GM12878 (cell line): ENCODE measurements at regions of chr17 and their contacts with region 1.

Region 1: GRCh38 chr17:45098869-45099616 is 33.3 kb downstream of the PLCD3 start:
- DNase-seq: no peak
- ATAC-seq: peak; percentile 100
- H3K4me3 ChIP-seq: no peak overlapping the region
- H3K27ac ChIP-seq: no peak overlapping the region
- H3K4me1 ChIP-seq: no peaks in the 10 kb centered on the region
- H3K27me3 ChIP-seq: no peaks in the 10 kb centered on the region
- CTCF ChIP-seq: peak; percentile 88 to 93 (median 91)
- EP300 ChIP-seq: no peak
- POLR2A ChIP-seq: no peak
- RAD21 ChIP-seq: peak; percentile 70

Region 2: DNA sequence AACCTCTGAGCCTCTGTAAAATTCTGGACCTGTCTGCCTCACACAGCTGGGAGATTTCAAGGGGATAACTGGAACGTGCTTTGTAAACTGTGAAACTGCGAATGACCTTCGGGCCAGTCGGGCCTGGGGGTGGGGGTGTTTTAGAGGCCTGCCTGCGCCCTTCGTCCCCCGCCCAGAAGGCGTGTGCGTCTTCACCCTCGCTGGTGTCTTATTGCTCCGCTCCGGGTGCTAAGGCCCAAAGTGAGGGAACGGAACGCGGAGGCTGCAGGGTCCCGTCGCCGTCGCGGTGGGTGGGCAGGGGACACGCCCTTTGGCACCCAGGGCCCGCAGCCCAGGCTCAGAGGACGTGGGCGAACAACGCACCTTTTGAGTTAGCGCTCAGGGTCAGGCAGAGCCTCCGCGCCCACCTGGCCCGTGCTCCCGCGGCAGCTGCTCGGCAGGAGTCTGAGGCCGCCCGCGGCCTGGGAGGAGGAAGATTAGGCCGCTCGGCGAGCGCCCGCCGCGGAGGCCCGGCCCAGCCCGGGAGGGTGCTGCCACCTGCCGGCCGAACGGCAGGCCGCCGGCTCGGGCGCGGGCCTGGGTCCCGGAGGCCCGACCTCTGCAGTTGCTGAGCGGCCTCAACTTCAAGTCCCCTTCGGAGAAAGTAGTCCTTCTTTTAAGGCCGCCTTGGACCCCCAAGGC is 77.3 kb before region 1 on chr17:
- CTCF ChIA-PET with region 1: interaction called, 41 read pairs
- POLR2A ChIA-PET with region 1: no interaction called
- RAD21 ChIA-PET with region 1: interaction called, 5 read pairs
- SMC1A ChIA-PET with region 1: interaction called, 8 read pairs
- in situ Hi-C with region 1: no loop called
- intact Hi-C with region 1: loop called (anchors 5 kb)
- DNase-seq: no peak
- ATAC-seq: peak; percentile 86
- H3K4me3 ChIP-seq: no peak overlapping the region
- H3K27ac ChIP-seq: no peak overlapping the region
- H3K4me1 ChIP-seq: peaks cover 29% of the 10 kb centered on the region
- H3K27me3 ChIP-seq: peaks cover 0 to 6% of the 10 kb centered on the region in 2 experiments; a peak in 2 of 4 replicates
- CTCF ChIP-seq: peak; percentile 62 to 89 (median 74); a peak in 5 of 6 replicates
- EP300 ChIP-seq: no peak
- POLR2A ChIP-seq: peak; percentile 44; the same call in 1 of the 2 replicates
- RAD21 ChIP-seq: peak; percentile 74

Region 3: DNA sequence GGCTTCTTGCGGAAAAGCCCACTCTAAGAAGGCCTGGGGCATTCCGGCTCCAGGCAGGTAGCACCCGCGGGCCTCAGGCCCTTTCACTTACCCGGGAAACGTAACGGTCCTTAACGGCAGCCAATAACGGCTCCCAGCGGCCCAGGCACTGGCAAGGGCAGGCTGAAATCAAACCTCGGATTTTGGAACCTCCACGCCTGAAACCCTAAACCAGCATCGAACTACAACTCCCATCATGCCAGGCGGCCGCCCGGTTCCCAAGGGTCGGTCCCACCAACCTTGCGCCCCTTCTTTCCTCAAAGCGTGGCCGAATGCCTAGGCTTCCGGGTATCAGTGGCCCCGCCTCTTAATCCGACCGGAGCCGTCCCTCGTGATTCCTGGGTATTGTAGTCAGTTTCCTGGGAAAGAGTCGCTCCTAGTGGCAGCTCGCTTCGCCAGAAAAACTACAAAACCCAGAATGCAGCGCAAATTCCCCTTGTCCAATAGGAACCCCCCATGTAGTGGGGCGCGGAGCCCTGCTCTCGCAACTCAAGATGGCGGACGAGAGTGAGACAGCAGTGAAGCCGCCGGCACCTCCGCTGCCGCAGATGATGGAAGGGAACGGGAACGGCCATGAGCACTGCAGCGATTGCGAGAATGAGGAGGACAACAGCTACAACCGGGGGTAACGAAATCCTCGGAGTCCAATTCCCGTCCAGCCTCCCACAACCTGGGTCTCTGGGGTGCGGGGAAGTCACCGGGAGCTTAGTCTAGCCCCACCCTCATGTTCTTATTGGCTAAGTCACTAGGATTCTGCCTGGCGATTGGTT is 38.0 kb before region 1 on chr17 and contains the start of gene NMT1:
- CTCF ChIA-PET with region 1: interaction called, 21 read pairs
- POLR2A ChIA-PET with region 1: no interaction called
- RAD21 ChIA-PET with region 1: interaction called, 3 read pairs
- SMC1A ChIA-PET with region 1: interaction called, 5 read pairs
- in situ Hi-C with region 1: no loop called
- intact Hi-C with region 1: no loop called
- DNase-seq: peak; percentile 99
- ATAC-seq: peak; percentile 90
- H3K4me3 ChIP-seq: peak within 1 kb of the TSS; percentile 84
- H3K27ac ChIP-seq: peak within 1 kb of the TSS; percentile 98
- H3K4me1 ChIP-seq: peaks cover 10% of the 10 kb centered on the region
- H3K27me3 ChIP-seq: no peaks in the 10 kb centered on the region
- CTCF ChIP-seq: no peak
- EP300 ChIP-seq: no peak
- POLR2A ChIP-seq: peak; percentile 98
- RAD21 ChIP-seq: no peak
- polyA plus RNA-seq, gene NMT1: 282 to 342 TPM

Region 4: GRCh38 chr17:45073414-45074070 is 25.5 kb before region 1 on chr17:
- CTCF ChIA-PET with region 1: interaction called, 12 read pairs
- POLR2A ChIA-PET with region 1: no interaction called
- RAD21 ChIA-PET with region 1: no interaction called
- SMC1A ChIA-PET with region 1: no interaction called
- in situ Hi-C with region 1: no loop called
- intact Hi-C with region 1: no loop called
- DNase-seq: no peak
- ATAC-seq: no peak
- H3K4me3 ChIP-seq: no peak overlapping the region
- H3K27ac ChIP-seq: no peak overlapping the region
- H3K4me1 ChIP-seq: peaks cover 19% of the 10 kb centered on the region
- H3K27me3 ChIP-seq: no peaks in the 10 kb centered on the region
- CTCF ChIP-seq: no peak
- EP300 ChIP-seq: no peak
- POLR2A ChIP-seq: no peak
- RAD21 ChIP-seq: no peak

Region 5: DNA sequence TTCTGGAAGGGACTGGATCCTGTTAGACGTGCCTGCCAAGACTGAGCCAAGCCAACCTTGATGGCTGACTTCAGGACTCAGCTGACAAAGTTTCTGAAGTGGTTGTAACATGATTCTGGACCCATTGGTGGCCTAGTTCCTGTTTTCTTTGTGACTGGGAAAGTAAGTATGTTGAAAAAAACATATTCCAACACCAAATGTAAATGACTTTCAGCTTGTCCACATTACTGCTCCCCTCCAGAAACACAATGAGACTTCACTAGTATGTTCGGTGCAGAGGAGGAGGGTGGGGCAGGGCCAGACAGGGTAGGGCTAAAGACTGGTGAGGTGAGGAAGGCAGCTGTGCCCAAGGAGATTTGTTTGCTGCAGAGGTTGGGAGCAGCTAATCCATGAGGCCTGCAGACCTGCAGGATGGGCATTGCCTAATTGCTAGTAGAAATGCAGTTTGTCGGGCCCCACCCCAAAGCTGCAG is 11.5 kb before region 1 on chr17:
- CTCF ChIA-PET with region 1: interaction called, 23 read pairs
- POLR2A ChIA-PET with region 1: no interaction called
- RAD21 ChIA-PET with region 1: no interaction called
- SMC1A ChIA-PET with region 1: interaction called, 5 read pairs
- in situ Hi-C with region 1: no loop called
- intact Hi-C with region 1: no loop called
- DNase-seq: no peak
- ATAC-seq: no peak
- H3K4me3 ChIP-seq: no peak overlapping the region
- H3K27ac ChIP-seq: no peak overlapping the region
- H3K4me1 ChIP-seq: peaks cover 6% of the 10 kb centered on the region
- H3K27me3 ChIP-seq: no peaks in the 10 kb centered on the region
- CTCF ChIP-seq: no peak
- EP300 ChIP-seq: no peak
- POLR2A ChIP-seq: no peak
- RAD21 ChIP-seq: no peak

Region 6: DNA sequence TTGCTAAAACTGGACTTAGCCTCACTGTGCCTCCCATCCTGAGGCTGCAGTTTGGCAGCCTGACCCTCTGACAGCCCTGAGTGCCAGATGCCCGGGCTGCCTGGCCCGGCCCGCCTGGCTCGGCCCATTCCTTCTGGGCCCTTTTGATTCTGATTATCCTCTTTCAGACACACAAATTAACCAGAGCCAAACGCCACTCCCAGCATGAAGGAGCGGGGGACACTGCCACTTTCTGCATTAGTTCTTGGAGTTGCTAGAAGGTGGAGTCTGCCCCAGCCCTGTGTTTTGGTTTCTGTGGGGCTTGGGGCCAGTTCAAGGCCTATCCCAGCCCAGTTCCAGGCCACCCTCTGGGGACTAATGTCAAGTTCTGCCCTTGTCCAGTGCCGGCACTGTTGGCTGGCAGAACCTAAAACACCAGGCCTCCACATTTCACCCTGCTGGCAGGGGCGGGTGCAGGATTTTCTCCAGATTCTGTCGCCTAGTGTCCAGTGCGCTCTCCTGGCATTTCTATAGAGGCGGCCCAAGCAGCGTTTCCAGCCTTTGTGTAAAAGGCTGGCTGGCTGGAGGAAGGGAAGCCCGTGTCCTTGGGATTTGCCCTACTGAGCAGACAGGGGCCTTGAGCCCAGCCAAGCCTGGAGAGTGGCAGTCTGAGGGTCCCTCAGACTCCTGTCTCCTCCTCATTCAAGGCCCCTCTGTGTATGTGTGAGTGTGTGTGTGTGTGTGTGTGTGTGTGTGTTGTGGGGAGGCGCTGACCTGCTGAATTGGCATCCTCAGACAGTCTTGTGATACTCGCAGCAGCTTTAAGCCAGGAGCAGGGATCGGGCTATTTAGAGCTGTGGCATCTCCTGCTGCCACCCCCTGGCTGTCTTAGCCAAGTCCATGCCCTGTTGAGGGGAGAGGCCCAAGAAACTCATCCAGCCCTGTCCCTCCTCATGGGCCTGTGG is 11.9 kb after region 1 on chr17:
- CTCF ChIA-PET with region 1: interaction called, 10 read pairs
- POLR2A ChIA-PET with region 1: no interaction called
- RAD21 ChIA-PET with region 1: no interaction called
- SMC1A ChIA-PET with region 1: interaction called, 3 read pairs
- in situ Hi-C with region 1: no loop called
- intact Hi-C with region 1: no loop called
- DNase-seq: no peak
- ATAC-seq: peak; percentile 24; the same call in 2 of the 3 replicates
- H3K4me3 ChIP-seq: no peak overlapping the region
- H3K27ac ChIP-seq: no peak overlapping the region
- H3K4me1 ChIP-seq: peaks cover 11% of the 10 kb centered on the region; the same call in 1 of the 2 replicates
- H3K27me3 ChIP-seq: no peaks in the 10 kb centered on the region
- CTCF ChIP-seq: no peak
- EP300 ChIP-seq: no peak
- POLR2A ChIP-seq: no peak
- RAD21 ChIP-seq: no peak

Region 7: DNA sequence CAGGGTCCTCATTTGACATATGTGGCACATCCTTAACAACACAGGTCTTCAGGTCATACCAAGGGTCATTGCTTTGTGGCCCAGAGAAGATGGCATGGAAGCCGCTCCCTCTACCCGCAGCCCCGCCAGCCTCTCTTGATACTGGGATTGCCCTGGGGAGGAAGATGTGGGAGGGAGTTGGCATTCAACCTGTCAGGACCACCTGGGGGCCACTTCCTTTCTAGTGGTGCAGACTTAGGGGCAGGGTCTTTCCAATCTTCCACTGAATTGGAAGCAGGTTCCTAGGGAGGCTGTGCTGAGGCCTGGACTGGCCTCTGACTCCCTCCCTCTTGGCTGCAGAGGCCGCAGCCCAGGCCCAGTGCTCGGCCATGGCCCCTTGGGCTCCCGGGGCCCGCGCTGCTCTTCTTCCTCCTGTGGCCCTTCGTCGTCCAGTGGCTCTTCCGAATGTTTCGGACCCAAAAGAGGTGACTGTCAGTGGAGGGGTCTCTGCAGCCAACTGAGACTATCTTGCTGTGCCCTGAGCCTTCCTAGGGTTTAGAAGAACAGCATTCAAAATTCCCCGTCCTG is 44.1 kb after region 1 on chr17:
- CTCF ChIA-PET with region 1: no interaction called
- POLR2A ChIA-PET with region 1: no interaction called
- RAD21 ChIA-PET with region 1: no interaction called
- SMC1A ChIA-PET with region 1: no interaction called
- in situ Hi-C with region 1: no loop called
- intact Hi-C with region 1: no loop called
- DNase-seq: no peak
- ATAC-seq: no peak
- H3K4me3 ChIP-seq: no peak overlapping the region
- H3K27ac ChIP-seq: no peak overlapping the region
- H3K4me1 ChIP-seq: peaks cover 18% of the 10 kb centered on the region
- H3K27me3 ChIP-seq: no peaks in the 10 kb centered on the region
- CTCF ChIP-seq: no peak
- EP300 ChIP-seq: no peak
- POLR2A ChIP-seq: no peak
- RAD21 ChIP-seq: no peak